K562 (cell line): ENCODE measurements at regions of chr20 and their contacts with region 1.

Region 1: GRCh38 chr20:5592823-5593739 is 157.1 kb upstream of the SHLD1 start:
- DNase-seq: peak in 1 of 4 experiments; percentile 9
- ATAC-seq: peak; percentile 82
- H3K4me3 ChIP-seq: 0 out of 2 replicates have a peak overlapping the region, but pooled peaks have one; percentile 1
- H3K27ac ChIP-seq: peak overlapping the region; percentile 80
- H3K4me1 ChIP-seq: peaks cover 10 to 37% of the 10 kb centered on the region in 2 experiments
- H3K27me3 ChIP-seq: no peaks in the 10 kb centered on the region
- CTCF ChIP-seq: no peak
- EP300 ChIP-seq: no peak
- POLR2A ChIP-seq: no peak
- RAD21 ChIP-seq: no peak

Region 2: GRCh38 chr20:5580936-5581708 is 12.0 kb before region 1 on chr20:
- CTCF ChIA-PET with region 1: no interaction called
- POLR2A ChIA-PET with region 1: interaction called, 12 read pairs
- in situ Hi-C with region 1: no loop called
- intact Hi-C with region 1: no loop called
- DNase-seq: no peak
- ATAC-seq: no peak
- H3K4me3 ChIP-seq: no peak overlapping the region
- H3K27ac ChIP-seq: no peak overlapping the region
- H3K4me1 ChIP-seq: no peaks in the 10 kb centered on the region
- H3K27me3 ChIP-seq: no peaks in the 10 kb centered on the region
- CTCF ChIP-seq: no peak
- EP300 ChIP-seq: no peak
- POLR2A ChIP-seq: no peak
- RAD21 ChIP-seq: no peak

Region 3: DNA sequence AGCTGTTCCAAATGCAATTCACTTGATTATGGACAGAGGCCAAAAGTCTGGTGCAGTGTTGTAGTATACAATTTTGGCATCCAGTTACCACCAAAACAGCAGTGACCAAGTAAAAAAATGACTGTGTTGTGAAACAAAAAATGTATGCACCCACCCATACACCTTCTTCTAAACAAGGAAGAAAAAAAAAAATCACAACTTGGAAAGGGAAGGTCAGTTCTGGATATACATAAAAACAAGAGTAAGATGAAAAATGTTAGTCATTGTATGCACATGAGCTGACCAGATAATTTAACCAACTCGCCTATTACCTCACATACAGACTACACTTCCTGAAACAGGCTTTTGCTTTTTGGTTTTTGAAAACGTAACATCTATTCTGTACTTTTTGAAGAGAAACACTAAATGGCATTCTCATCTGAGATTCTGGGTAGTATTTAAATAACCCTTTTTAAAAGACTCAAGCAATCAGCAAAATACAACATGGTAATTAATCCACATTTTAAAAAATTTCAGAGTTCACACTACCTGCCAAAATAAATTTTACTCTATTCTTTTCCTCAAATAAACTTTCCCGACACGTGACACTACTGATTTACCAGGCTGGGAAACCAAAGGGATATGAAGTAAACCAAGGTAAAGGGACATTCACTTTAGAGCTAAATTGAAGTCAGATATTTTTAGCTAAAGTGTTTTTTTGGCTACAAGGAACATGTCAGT is 15.5 kb after region 1 on chr20:
- CTCF ChIA-PET with region 1: no interaction called
- POLR2A ChIA-PET with region 1: interaction called, 12 read pairs
- in situ Hi-C with region 1: no loop called
- intact Hi-C with region 1: loop called (anchors 2 kb)
- DNase-seq: peak in 1 of 4 experiments; percentile 37
- ATAC-seq: peak; percentile 29
- H3K4me3 ChIP-seq: peak overlapping the region; percentile 55
- H3K27ac ChIP-seq: peak overlapping the region; percentile 95
- H3K4me1 ChIP-seq: peaks cover 2 to 3% of the 10 kb centered on the region in 2 experiments; a peak in 4 of 5 replicates
- H3K27me3 ChIP-seq: no peaks in the 10 kb centered on the region
- CTCF ChIP-seq: no peak
- EP300 ChIP-seq: no peak
- POLR2A ChIP-seq: no peak
- RAD21 ChIP-seq: no peak